ENCODE measurements at regions of chr5 and their contacts with region 1.

Region 1: DNA sequence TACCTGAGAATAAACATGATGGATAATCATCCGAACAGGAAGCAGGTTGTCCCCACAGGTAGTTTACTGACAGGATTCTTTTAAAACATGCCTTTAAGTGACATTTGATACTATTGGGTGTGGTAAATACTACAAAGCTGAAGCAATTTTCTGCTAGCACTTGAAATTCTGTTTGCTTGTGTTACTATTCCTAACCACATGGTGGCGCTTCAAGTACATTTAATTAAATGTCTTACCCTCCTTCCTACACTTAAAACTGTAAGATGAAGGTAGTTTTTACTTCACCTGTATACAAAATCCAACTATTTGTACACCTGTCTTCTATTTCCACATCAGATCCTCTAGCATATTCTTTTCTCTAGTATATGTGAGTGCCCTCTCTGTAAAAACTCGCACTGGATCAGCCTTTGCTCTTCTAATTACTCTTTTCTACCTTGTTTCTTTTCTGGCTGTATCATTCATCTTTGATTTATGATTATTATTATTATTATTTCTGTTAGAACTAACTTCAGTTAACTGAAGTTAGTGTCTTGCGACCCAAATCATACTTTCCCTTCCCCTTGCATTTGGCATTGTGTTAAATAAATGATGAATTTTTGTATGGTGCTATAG is 18.4 kb downstream of the SLC25A46 start:
- DNase-seq: peak; percentile 36 to 49
- H3K4me3 ChIP-seq: no peak overlapping the region
- H3K4me1 ChIP-seq: no peaks in the 10 kb centered on the region
- H3K27me3 ChIP-seq: no peaks in the 10 kb centered on the region

Region 2: DNA sequence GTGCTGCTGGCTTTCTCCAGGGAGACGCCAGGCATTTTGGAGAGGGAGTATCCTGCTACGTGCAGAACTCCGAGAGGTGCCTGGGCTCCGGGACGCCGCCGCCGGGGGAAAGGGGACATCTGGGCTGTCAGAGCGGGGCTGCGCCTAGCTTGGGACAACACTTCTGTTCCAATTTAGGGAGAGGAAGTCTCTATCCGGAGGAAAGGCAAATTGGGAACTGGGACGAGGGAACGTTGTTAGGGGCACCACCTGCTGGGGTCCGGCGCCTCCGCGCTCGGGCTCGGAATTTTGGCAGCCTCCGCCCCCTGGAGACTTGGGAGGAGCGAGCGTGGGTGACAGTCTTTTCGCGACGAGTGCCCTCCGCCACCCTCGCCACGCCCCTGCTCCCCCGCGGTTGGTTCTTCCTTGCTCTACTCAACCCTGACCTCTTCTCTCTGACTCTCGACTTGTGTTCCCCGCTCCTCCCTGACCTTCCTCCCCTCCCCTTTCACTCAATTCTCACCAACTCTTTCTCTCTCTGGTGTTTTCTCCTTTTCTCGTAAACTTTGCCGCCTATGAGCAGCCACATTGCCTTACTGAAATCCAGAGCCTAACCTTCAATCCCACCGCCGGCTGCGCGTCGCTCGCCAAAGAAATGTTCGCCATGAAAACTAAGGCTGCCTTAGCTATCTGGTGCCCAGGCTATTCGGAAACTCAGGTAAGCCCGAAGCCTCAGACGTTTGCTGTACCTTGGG is 315.9 kb after region 1 on chr5:
- in situ Hi-C with region 1: loop called (anchors 25 kb)
- DNase-seq: peak; percentile 84 to 92
- H3K4me3 ChIP-seq: peak overlapping the region; percentile 52
- H3K4me1 ChIP-seq: peaks cover 2% of the 10 kb centered on the region
- H3K27me3 ChIP-seq: peaks cover 10% of the 10 kb centered on the region; the same call in 1 of the 2 replicates

Region 3: GRCh38 chr5:111254613-111255012 is 497.4 kb after region 1 on chr5:
- in situ Hi-C with region 1: loop called (anchors 25 kb)
- DNase-seq: no peak
- H3K4me3 ChIP-seq: no peak overlapping the region
- H3K4me1 ChIP-seq: no peaks in the 10 kb centered on the region
- H3K27me3 ChIP-seq: no peaks in the 10 kb centered on the region